Head of caudate nucleus (tissue), 42 donors: ENCODE measurements at regions of chr1 and their contacts with region 1.

Region 1: GRCh38 chr1:183655562-183656075 is 2.5 kb upstream of the APOBEC4 start:
- DNase-seq: peak; percentile 34 to 97 (median 88)

Region 2: DNA sequence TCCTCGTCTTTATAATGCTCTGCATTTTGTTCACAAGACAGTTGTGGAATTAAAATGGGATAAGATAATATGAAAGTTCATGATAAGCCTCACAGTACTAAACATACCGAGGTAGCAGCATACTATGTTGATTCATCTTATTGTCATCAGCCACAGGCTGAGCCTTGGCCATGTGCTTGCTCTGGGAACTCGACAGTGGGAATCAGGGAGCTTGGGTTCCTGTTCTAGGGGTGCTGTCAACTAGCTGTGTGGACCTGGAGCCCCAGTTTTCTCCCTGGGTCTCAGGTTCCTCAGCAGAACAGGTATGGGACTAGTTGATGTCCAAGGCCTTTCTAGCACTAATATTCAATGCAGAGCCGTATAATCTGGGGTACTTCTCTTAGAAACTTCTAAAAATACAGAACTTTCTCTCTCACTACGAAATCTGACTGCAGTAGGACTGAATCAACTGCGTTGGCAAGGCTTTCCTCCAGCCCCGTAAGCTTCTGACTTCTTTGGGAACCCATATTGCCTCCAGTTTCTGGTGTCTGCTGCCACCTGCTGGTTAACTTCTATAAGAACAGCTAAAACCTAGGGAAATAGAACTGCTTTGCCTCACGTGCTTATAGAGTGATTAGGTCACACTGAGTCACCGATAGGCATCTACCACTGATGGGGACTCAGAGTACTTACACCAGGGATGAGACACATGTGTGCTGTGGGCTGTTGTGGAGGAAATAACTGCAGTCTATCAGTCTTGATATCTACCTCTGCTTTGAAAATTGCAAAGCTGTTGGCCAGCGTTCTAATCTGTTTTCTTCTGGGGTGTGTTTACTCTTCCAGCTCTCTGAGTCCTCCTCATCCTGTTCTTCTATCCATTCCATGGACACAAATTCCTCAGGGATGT is 260.2 kb after region 1 on chr1:
- intact Hi-C with region 1: loop called (anchors 2 kb)
- DNase-seq: peak in 41 of 42 donors; percentile 48 to 94 (median 81)

Region 3: DNA sequence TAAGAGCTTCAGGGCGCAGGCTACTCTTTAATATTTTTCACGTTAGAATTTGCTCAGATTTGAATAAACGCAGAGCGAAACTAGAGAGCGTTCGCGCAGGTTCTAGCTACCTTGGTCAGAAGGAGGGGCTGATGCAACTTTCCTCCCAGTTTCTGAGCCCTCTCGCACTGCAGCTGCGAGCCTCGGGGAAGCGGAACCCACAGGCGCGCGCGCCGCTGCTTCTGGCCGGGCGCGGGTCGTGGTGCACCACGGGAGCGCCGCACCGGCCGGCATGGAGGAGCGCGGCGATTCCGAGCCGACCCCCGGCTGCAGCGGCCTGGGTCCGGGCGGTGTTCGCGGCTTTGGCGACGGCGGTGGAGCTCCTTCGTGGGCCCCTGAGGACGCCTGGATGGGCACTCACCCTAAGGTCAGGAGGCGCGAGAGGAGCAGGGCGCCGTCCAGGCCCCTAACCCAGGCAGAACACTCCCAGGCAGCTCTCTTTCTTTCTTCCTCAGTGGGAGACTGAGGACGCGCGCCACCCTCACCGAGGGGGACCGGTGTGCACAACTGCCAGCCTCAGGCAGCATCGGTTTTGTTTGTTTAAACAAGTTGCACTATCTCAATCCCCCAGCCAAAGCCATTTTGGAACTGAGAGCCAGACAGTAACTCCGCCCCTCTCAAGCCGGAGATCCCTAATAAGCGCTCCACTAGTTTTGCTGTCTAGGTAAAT is 396.0 kb after region 1 on chr1 and contains the start of gene TSEN15:
- intact Hi-C with region 1: loop called (anchors 10 kb)
- DNase-seq: peak; percentile 48 to 92 (median 82)

Region 4: DNA sequence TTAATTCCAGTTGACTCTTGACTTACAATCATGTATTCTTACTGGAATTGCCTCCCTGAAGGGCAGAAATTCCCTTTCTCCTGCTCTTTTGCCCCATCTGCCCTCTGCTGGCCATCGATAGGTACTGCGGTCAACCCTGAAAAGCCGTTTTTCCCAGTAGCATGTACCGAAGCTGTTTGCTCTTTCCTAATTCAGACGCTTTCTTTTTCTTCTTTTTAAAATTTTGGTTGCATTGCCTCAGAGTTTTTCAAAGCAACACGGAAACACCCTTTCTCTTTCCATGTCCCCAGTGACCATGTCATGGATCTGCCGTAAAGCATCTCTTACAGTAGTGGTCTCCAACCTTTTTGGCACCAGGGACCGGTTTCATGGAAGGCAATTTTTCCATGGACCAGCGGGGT is 567.0 kb after region 1 on chr1:
- intact Hi-C with region 1: loop called (anchors 10 kb)
- DNase-seq: peak in 41 of 42 donors; percentile 26 to 88 (median 68)